ENCODE measurements at regions of chr15 and their contacts with region 1.

Region 1: GRCh38 chr15:68383161-68384074 is 48.5 kb downstream of the ITGA11 start:
- DNase-seq: peak in 7 of 9 experiments; percentile 11 to 69 (median 43)
- ATAC-seq: peak; percentile 63
- H3K4me3 ChIP-seq: no peak overlapping the region
- H3K4me3 Mint-ChIP-seq: no peak overlapping the region
- H3K27ac ChIP-seq: no peak overlapping the region
- H3K27ac Mint-ChIP-seq: no peak overlapping the region
- H3K4me1 ChIP-seq: peaks cover 13% of the 10 kb centered on the region
- H3K4me1 Mint-ChIP-seq: peaks cover 16% of the 10 kb centered on the region
- H3K27me3 ChIP-seq: no peaks in the 10 kb centered on the region
- H3K27me3 Mint-ChIP-seq: peaks cover 3% of the 10 kb centered on the region
- CTCF ChIP-seq: peak; percentile 73

Region 2: GRCh38 chr15:68252925-68253534 is 130.4 kb before region 1 on chr15:
- CTCF ChIA-PET with region 1: interaction called, 20 read pairs
- POLR2A ChIA-PET with region 1: no interaction called
- intact Hi-C with region 1: loop called in 1 of 2 experiments (anchors 1 kb)
- DNase-seq: peak in 6 of 9 experiments; percentile 9 to 74 (median 38)
- ATAC-seq: peak; percentile 80
- H3K4me3 ChIP-seq: no peak overlapping the region
- H3K4me3 Mint-ChIP-seq: no peak overlapping the region
- H3K27ac ChIP-seq: no peak overlapping the region
- H3K27ac Mint-ChIP-seq: no peak overlapping the region
- H3K4me1 ChIP-seq: no peaks in the 10 kb centered on the region
- H3K4me1 Mint-ChIP-seq: peaks cover 8% of the 10 kb centered on the region
- H3K27me3 ChIP-seq: peaks cover 0 to 2% of the 10 kb centered on the region in 2 experiments
- H3K27me3 Mint-ChIP-seq: peaks cover 6% of the 10 kb centered on the region
- CTCF ChIP-seq: peak; percentile 95

Region 3: GRCh38 chr15:68360721-68361120 is 22.7 kb before region 1 on chr15:
- CTCF ChIA-PET with region 1: no interaction called
- POLR2A ChIA-PET with region 1: no interaction called
- intact Hi-C with region 1: no loop called
- DNase-seq: no peak
- ATAC-seq: no peak
- H3K4me3 ChIP-seq: no peak overlapping the region
- H3K4me3 Mint-ChIP-seq: no peak overlapping the region
- H3K27ac ChIP-seq: no peak overlapping the region
- H3K27ac Mint-ChIP-seq: no peak overlapping the region
- H3K4me1 ChIP-seq: no peaks in the 10 kb centered on the region
- H3K4me1 Mint-ChIP-seq: no peaks in the 10 kb centered on the region
- H3K27me3 ChIP-seq: no peaks in the 10 kb centered on the region
- H3K27me3 Mint-ChIP-seq: no peaks in the 10 kb centered on the region
- CTCF ChIP-seq: no peak

Measured in CD8-positive, alpha-beta T cell (primary cell).